ENCODE measurements at regions of chr10 and their contacts with region 1.

Region 1: DNA sequence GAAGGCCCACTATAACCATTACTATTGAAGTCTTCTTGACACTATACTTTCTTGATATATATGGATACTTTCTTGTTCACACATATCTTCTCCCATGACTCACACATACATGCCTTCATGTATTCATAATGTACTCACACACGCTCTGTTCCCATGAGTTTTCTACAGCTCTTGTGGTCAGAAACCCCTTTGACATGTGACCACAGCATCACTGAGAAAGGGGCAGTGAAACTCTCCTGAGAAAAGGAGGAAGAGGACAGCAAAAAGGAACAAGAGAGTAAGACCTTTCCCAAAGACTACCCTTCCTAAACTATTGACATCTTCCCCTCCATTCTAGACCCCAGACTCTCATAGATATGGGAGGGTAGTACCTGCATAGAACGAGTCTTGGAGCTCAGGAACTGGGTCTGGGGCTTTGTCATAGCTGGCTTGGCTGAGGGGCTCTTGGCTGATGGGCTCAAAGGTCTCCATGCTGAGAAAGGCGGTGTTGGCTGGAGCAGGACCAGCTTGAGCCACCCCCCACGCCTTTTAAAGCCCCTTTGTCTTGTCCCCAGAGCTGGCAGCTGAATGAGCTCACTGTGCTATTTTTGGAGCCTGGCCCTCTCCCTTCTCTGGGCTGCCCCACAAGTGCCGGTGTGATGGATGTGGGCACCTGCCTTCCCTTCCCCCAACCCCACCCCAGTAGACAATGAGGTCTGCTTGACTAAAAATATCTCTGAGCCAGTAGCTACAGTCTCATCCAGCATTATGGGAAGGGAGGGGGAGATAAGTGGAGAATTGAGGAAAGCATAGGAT is 5.1 kb downstream of the SYNPO2L start:
- DNase-seq: peak; percentile 89

Region 2: DNA sequence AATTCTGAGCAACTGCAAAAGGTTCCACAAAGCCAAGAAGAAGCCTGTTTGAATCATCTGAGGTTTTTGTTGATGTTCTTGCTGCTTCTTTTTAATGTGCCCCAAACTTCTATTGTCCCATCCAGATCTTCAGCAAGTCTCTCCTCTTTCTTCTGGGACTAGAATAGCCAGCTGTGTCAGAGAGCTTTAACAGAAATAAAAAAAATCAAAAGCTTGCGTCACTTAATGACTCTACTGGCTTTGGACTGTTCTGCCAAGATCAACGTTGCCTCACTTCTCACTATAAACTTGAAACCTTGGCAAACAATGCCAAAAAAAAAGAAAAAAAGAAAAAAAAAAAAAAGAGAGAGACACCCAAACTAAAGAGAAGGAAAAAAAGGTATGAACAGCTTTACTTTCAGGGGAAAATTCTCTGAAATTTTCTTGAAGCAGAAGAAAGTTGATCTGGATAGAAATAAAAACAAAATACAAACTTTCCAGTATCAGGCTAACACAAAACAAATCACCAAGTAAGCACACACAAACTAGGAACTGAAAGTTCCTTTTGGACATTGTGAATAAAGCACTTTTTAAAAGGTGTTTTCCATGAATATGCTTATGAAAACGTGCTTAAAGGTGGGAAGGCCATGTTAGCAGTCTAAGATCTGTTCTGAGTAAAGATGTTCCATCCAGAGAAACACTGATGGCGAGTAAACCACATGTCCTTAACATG is 74.4 kb before region 1 on chr10:
- intact Hi-C with region 1: loop called (anchors 5 kb)
- DNase-seq: no peak

Region 3: GRCh38 chr10:73716251-73716650 is 65.5 kb after region 1 on chr10:
- intact Hi-C with region 1: no loop called
- DNase-seq: no peak

Region 4: GRCh38 chr10:73772280-73773151 is 121.8 kb after region 1 on chr10:
- intact Hi-C with region 1: loop called (anchors 5 kb)
- DNase-seq: peak; percentile 89

Measured in cardiac septum (tissue), 1 donor.